ENCODE measurements at regions of chrX and their contacts with region 1.

Region 1: GRCh38 chrX:20530406-20530921 is 263.8 kb upstream of the RPS6KA3 start:
- DNase-seq: peak; percentile 41
- H3K4me3 ChIP-seq: no peak overlapping the region
- H3K27ac ChIP-seq: no peak overlapping the region
- H3K4me1 ChIP-seq: peaks cover 8% of the 10 kb centered on the region
- H3K27me3 ChIP-seq: peaks cover 11 to 14% of the 10 kb centered on the region in 2 experiments
- CTCF ChIP-seq: peak; percentile 41 to 43
- POLR2A ChIP-seq: no peak

Region 2: DNA sequence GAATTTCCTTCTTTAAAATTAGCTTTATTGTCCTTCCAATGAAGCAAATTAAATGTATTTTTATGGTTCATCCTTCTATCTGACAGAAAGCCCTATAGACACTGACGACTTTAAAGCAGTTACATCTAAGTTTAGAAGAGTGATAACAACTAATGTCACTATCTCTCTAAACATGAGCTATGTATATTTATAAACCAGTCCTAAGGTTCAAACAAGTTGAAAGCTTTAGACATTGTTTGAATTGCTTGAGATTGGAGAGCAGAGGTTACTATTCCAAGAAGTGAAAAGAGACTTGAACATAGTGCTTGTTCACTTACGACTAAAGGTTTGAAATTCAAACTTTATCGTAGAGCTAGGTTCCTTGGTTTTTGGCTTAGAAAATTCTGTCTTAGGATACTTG is 358.6 kb before region 1 on chrX:
- CTCF ChIA-PET with region 1: no interaction called
- POLR2A ChIA-PET with region 1: no interaction called
- dilution Hi-C with region 1: no loop called
- intact Hi-C with region 1: no loop called
- DNase-seq: no peak
- H3K4me3 ChIP-seq: no peak overlapping the region
- H3K27ac ChIP-seq: no peak overlapping the region
- H3K4me1 ChIP-seq: no peaks in the 10 kb centered on the region
- H3K27me3 ChIP-seq: no peaks in the 10 kb centered on the region
- CTCF ChIP-seq: no peak
- POLR2A ChIP-seq: no peak

Region 3: DNA sequence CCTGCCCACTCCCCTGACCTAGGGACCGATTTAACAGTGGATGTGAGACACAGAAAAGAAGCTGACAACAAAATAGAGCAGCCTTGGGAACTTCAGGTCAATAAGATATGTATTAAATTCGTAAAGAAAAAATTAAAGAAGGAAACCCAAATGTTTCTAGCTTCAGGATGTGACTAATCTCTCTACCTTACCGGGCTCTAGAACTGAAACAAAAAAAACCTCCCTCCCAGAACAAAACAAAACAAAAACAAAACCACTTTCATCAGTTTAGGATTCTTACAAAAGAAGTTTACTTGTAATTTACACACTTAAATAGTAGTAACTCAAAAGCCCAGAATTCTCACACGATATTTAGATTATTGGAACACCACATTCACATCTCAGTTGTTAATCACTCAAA is 78.0 kb before region 1 on chrX:
- CTCF ChIA-PET with region 1: no interaction called
- POLR2A ChIA-PET with region 1: no interaction called
- dilution Hi-C with region 1: no loop called
- intact Hi-C with region 1: no loop called
- DNase-seq: no peak
- H3K4me3 ChIP-seq: no peak overlapping the region
- H3K27ac ChIP-seq: no peak overlapping the region
- H3K4me1 ChIP-seq: peaks cover 13% of the 10 kb centered on the region
- H3K27me3 ChIP-seq: no peaks in the 10 kb centered on the region
- CTCF ChIP-seq: no peak
- POLR2A ChIP-seq: no peak

Region 4: DNA sequence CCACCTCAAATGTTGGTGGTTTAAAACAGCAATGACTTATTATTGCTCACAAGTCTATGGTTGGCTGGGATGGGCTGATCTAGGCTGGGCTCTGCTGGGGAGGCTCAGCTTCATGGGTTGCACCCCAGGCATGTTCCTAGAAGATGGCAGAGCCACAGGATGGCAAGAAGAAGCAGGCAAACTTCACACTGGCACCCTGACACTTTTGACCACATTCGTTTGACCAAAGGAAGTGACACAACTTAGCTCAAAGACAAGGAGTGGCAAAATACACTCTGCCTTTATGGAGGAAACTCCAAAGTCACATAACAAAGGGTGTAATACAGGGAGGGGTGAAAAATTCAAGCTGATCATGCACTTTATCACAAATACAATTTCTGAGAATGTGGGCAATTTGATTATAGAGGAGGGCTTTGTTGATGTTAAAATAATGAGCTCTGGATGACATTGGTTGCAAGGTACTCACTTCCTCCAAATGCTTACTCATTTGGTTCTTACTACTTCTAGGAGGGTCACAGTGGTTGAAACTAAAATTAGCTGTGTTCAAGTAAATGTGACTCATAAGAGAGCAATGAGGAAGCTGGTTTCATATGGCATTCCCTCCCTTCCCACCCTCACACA is 14.5 kb before region 1 on chrX:
- CTCF ChIA-PET with region 1: interaction called, 24 read pairs
- POLR2A ChIA-PET with region 1: no interaction called
- dilution Hi-C with region 1: no loop called
- intact Hi-C with region 1: no loop called
- DNase-seq: peak; percentile 72
- H3K4me3 ChIP-seq: no peak overlapping the region
- H3K27ac ChIP-seq: peak overlapping the region; percentile 71
- H3K4me1 ChIP-seq: peaks cover 53% of the 10 kb centered on the region
- H3K27me3 ChIP-seq: no peaks in the 10 kb centered on the region
- CTCF ChIP-seq: no peak
- POLR2A ChIP-seq: no peak

Region 5: GRCh38 chrX:21725496-21725895 is 1195.0 kb after region 1 on chrX:
- CTCF ChIA-PET with region 1: interaction called, 93 read pairs
- POLR2A ChIA-PET with region 1: no interaction called
- dilution Hi-C with region 1: no loop called
- intact Hi-C with region 1: loop called (anchors 1 kb)
- DNase-seq: no peak
- H3K4me3 ChIP-seq: no peak overlapping the region
- H3K27ac ChIP-seq: no peak overlapping the region
- H3K4me1 ChIP-seq: no peaks in the 10 kb centered on the region
- H3K27me3 ChIP-seq: no peaks in the 10 kb centered on the region
- CTCF ChIP-seq: peak; percentile 6 to 8
- POLR2A ChIP-seq: no peak

Region 6: DNA sequence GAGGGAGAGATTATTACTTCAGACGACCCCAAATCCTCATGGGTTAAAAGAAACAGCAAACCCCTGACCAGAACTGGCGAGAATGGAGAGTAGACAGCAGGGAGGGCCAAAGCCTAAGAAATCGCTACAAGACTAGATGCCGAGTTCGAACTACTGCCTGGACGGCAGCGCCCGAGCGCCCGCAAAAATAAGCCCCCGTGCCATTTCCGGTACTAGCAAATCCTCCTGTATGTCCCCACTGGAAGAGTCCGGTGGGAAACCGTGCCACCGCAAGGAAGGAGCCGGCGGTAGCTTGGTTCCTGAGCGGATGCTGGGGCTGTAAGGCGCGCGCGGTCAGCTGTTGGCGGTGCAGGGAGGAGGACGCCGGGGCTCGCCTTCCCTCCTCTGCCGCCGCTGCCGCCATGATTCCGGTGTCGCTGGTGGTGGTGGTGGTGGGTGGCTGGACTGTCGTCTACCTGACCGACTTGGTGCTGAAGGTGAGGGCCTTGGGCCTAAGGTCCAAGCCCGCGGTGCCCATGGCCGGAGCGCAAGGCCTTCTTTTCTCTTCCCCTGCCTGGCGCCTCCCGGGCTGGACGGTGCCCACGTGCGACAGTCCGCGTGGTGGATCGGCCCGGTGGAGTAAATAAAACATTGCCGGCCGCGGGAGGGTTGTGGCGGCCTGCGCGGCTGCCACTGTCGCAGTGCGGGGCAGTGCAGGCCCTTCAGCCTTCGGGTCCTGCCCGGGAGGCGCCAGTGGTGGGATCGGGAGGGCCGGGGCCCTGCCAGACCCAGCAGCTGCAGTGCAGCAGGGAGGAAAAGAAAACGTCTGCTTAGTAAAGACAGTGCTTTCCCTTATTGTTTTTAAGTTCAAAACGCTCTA is 1309.1 kb after region 1 on chrX and contains the start of gene MBTPS2:
- CTCF ChIA-PET with region 1: interaction called, 3 read pairs
- POLR2A ChIA-PET with region 1: no interaction called
- dilution Hi-C with region 1: no loop called
- intact Hi-C with region 1: loop called (anchors 5 kb)
- DNase-seq: peak; percentile 90
- H3K4me3 ChIP-seq: peak within 1 kb of the TSS; percentile 44 to 81 (median 62)
- H3K27ac ChIP-seq: peak within 1 kb of the TSS; percentile 86
- H3K4me1 ChIP-seq: no peaks in the 10 kb centered on the region
- H3K27me3 ChIP-seq: no peaks in the 10 kb centered on the region
- CTCF ChIP-seq: peak in 1 of 2 donors; percentile 15
- POLR2A ChIP-seq: peak; percentile 80
- total RNA-seq, gene MBTPS2: 14.5 and 16.4 TPM in 2 replicates